ENCODE measurements at regions of chr6 and their contacts with region 1.

Region 1: GRCh38 chr6:106223300-106223930 is 102.1 kb downstream of the ATG5 start:
- DNase-seq: peak; percentile 48
- H3K4me3 Mint-ChIP-seq: no peak overlapping the region
- H3K27ac Mint-ChIP-seq: no peak overlapping the region
- H3K4me1 Mint-ChIP-seq: peaks cover 44% of the 10 kb centered on the region
- H3K27me3 Mint-ChIP-seq: no peaks in the 10 kb centered on the region

Region 2: DNA sequence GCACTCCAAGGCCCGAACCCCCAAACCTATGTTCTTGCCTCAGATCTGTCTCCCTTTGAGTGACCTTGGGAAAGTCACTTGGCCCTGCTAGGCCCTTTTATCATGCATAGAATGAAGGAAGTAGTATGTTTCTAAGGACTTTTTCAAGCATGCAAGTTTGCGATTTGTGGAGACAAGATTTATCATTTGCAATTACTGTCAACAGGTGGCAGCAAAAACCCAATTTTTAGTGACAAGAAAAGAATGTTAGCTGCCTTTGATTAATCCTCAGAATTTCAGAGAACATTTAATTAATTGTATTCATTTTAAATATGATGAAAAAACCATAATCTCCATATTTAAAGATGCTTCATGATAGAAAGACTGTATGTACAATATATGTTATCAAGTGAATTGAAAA is 792.2 kb before region 1 on chr6:
- intact Hi-C with region 1: loop called (anchors 1 kb)
- DNase-seq: no peak
- H3K4me3 Mint-ChIP-seq: no peak overlapping the region
- H3K27ac Mint-ChIP-seq: no peak overlapping the region
- H3K4me1 Mint-ChIP-seq: peaks cover 6% of the 10 kb centered on the region
- H3K27me3 Mint-ChIP-seq: peaks cover 26% of the 10 kb centered on the region

Region 3: DNA sequence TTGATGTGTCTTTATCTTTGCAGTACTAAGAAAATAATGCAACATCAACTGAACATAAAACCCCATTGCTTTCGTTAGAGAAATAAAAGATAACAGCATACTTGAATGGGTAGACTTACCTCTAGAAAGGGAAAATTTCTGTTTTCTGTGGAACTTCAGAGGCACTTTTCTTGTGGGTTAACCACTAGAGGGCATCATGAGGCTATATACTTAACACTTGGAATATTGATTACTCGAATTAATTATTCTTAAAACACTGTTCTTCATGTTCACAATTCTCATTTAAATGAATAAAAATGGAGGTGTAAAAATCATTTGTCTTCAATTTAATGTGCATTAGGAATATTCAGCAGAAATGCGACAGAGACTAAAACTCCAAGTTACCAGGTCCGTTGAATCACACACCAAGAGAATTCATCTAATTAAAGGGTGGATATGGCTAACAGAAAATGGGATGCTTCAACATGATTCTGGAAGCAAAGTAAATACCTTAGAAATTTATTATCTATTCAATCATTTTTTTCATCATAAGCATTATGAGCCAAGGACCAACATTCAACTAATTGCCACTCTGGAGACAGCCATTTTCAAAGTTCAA is 489.8 kb before region 1 on chr6:
- intact Hi-C with region 1: loop called (anchors 5 kb)
- DNase-seq: no peak
- H3K4me3 Mint-ChIP-seq: no peak overlapping the region
- H3K27ac Mint-ChIP-seq: no peak overlapping the region
- H3K4me1 Mint-ChIP-seq: peaks cover 21% of the 10 kb centered on the region
- H3K27me3 Mint-ChIP-seq: peaks cover 2% of the 10 kb centered on the region

Region 4: DNA sequence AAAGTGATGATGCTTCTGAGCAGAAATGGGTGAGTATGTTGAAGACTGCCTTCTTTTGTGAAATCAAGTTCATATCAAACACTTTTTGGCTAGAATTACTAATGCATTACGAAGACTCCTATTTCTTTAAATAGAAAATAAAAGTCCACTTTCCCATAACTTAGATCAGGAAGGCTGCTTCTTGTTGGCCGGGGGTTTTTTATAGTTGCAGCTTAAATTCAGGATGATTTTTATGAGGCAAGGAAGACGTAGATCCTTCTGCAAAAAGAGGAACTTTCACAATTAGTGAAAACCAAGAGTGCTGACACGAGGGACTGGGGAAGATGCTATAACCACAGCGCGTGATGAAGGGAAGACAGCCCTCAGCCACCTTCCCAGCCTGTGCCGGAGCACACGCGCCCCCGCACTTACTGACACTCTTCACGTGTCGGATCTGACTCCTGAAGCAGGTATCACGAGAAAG is 343.4 kb before region 1 on chr6:
- intact Hi-C with region 1: loop called (anchors 10 kb)
- DNase-seq: no peak
- H3K4me3 Mint-ChIP-seq: peak overlapping the region; percentile 43
- H3K27ac Mint-ChIP-seq: peak overlapping the region; percentile 21
- H3K4me1 Mint-ChIP-seq: peaks cover 58% of the 10 kb centered on the region
- H3K27me3 Mint-ChIP-seq: peaks cover 4% of the 10 kb centered on the region

Region 5: DNA sequence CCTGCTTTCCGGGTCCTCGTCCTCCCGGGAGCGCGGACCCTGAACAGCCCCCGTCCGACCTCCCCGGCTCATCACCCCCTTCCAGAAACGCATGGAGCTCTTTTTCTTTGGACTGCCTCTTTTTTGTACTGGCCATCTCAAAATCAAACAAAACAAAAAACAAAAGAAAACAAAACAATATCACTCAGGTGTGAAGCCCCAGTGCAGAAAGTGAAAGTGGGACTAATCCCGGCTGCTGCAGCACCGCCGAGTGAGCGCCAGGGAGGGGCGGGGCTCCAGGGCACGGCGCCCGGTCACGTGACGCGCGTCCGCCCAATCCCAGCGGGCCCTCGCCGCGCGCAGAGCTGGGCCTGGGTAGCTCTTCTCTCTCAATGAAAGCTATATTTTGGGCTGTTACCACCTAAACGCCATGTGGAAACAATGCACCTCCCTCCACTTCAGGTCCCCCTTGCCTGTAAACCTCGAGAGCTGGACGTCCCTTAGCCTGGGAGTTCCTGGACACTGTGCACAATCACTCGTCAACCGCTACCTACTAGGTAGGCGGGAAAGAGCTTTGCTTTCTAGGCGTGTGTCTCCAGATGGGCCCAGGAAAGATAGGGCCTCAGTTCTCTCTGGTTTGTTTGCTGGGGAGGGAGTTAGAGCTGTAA is 231.0 kb before region 1 on chr6:
- intact Hi-C with region 1: loop called (anchors 5 kb)
- DNase-seq: peak; percentile 89
- H3K4me3 Mint-ChIP-seq: peak overlapping the region; percentile 94
- H3K27ac Mint-ChIP-seq: peak overlapping the region; percentile 81
- H3K4me1 Mint-ChIP-seq: peaks cover 57% of the 10 kb centered on the region
- H3K27me3 Mint-ChIP-seq: peaks cover 23% of the 10 kb centered on the region

Region 6: GRCh38 chr6:106187424-106187982 is 35.9 kb before region 1 on chr6:
- intact Hi-C with region 1: loop called (anchors 2 kb)
- DNase-seq: no peak
- H3K4me3 Mint-ChIP-seq: peak overlapping the region; percentile 48
- H3K27ac Mint-ChIP-seq: peak overlapping the region; percentile 86
- H3K4me1 Mint-ChIP-seq: peaks cover 68% of the 10 kb centered on the region
- H3K27me3 Mint-ChIP-seq: no peaks in the 10 kb centered on the region

Region 7: DNA sequence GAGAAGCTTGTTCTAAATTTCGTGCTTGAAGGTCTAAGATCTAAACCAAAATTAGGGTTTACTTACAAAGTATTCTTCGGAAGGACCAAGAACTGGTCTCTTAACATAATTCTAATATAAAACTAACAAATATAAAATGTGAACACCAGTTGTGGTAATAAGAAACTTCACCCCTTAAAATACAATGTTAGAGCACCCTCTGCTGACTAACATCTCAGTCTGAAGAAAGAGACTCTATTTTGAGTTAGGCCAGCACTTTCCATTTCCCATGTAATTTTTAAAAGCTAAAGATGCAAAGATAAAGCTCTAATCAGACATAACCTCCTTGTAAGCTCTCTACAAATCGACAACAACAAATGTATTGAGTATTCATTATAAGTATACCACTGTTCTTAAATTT is 77.5 kb after region 1 on chr6:
- intact Hi-C with region 1: loop called (anchors 5 kb)
- DNase-seq: no peak
- H3K4me3 Mint-ChIP-seq: no peak overlapping the region
- H3K27ac Mint-ChIP-seq: no peak overlapping the region
- H3K4me1 Mint-ChIP-seq: peaks cover 13% of the 10 kb centered on the region
- H3K27me3 Mint-ChIP-seq: no peaks in the 10 kb centered on the region